Mammary epithelial cell (primary cell): ENCODE measurements at regions of chr3 and their contacts with region 1.

Region 1: DNA sequence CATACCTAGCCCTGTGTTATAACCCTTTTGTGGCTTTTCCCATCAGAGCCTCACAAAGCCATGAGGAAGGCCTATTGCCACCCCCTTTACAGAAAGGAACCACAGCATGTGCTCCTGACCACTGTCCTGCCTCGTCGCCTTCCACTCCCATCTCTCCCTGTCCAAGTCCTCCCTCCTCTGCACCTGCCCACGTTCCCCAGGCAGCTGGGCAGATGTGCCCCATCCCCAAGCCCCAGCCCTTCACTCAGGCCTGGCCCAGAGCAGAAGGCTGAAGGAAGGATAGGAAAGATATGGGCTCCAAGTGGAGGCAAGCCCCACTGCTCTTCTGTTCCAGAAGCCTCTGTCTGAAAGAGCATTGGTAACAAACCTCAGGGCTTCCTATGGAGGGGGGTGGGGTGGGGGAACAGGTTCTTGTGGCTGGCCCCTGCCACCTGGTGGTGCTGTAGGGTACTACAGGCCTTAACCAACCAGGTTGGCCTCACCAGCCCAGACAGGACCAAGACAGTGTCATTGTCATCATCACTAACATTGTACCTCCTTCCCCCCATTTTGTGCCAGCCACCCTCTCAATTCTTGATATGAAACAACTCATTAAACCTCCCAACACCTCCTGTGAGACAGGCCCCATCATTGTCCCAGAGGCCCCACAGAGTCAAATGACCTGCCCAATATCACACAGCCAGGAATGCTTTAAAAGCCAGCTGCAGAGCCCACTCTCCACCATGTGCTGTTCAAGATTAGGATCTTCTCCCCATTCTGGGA is 10.0 kb downstream of the POC1A start:
- DNase-seq: peak; percentile 53
- H3K4me3 ChIP-seq: no peak overlapping the region
- H3K27ac ChIP-seq: no peak overlapping the region
- H3K4me1 ChIP-seq: peaks cover 9% of the 10 kb centered on the region
- H3K27me3 ChIP-seq: no peaks in the 10 kb centered on the region
- CTCF ChIP-seq: peak; percentile 82 to 94

Region 2: GRCh38 chr3:51879937-51880336 is 264.3 kb before region 1 on chr3:
- CTCF ChIA-PET with region 1: no interaction called
- dilution Hi-C with region 1: loop called (anchors 10 kb)
- in situ Hi-C with region 1: no loop called
- intact Hi-C with region 1: no loop called
- DNase-seq: no peak
- H3K4me3 ChIP-seq: no peak overlapping the region
- H3K27ac ChIP-seq: no peak overlapping the region
- H3K4me1 ChIP-seq: no peaks in the 10 kb centered on the region
- H3K27me3 ChIP-seq: no peaks in the 10 kb centered on the region
- CTCF ChIP-seq: no peak

Region 3: GRCh38 chr3:51955893-51956770 is 188.1 kb before region 1 on chr3:
- CTCF ChIA-PET with region 1: no interaction called
- dilution Hi-C with region 1: loop called (anchors 10 kb)
- in situ Hi-C with region 1: no loop called
- intact Hi-C with region 1: loop called (anchors 5 kb)
- DNase-seq: peak; percentile 64
- H3K4me3 ChIP-seq: peak overlapping the region in 1 of 3 experiments; percentile 19
- H3K27ac ChIP-seq: no peak overlapping the region
- H3K4me1 ChIP-seq: peaks cover 15% of the 10 kb centered on the region
- H3K27me3 ChIP-seq: no peaks in the 10 kb centered on the region
- CTCF ChIP-seq: peak; percentile 46 to 72

Region 4: DNA sequence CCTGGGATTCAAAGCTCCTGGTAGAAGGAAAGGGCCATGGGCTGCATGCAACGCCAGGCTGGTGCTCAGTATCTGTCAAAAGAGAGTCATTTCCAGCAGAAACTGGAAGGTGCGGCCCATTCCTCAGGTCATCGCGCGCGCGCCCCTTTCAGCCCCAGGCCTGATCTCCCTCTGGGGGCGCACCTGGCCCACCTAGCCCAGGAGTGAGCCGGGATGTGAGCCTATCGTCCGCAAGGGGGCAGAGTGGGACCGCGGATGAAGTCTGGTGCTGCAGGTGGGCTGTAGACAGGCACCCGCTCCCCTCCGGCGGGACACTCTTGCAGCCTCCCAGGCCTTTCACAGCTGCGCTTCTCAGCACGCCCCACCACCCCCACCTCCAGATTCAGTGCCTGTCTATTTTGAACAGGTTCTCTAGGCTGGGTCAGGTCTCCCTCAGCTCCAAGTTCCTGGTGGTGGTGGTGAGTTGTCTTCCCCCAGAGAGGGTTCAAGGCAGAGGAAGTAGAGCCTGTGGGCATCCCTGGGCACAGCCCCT is 142.7 kb before region 1 on chr3:
- CTCF ChIA-PET with region 1: no interaction called
- dilution Hi-C with region 1: no loop called
- in situ Hi-C with region 1: loop called in 1 of 2 experiments (anchors 5 kb)
- intact Hi-C with region 1: loop called (anchors 1 kb)
- DNase-seq: peak; percentile 49
- H3K4me3 ChIP-seq: no peak overlapping the region
- H3K27ac ChIP-seq: no peak overlapping the region
- H3K4me1 ChIP-seq: peaks cover 35% of the 10 kb centered on the region
- H3K27me3 ChIP-seq: no peaks in the 10 kb centered on the region
- CTCF ChIP-seq: peak; percentile 75 to 90

Region 5: GRCh38 chr3:52181543-52181942 is 37.3 kb after region 1 on chr3:
- CTCF ChIA-PET with region 1: no interaction called
- dilution Hi-C with region 1: loop called (anchors 5 kb)
- in situ Hi-C with region 1: no loop called
- intact Hi-C with region 1: no loop called
- DNase-seq: peak; percentile 57
- H3K4me3 ChIP-seq: no peak overlapping the region
- H3K27ac ChIP-seq: no peak overlapping the region
- H3K4me1 ChIP-seq: peaks cover 7% of the 10 kb centered on the region
- H3K27me3 ChIP-seq: no peaks in the 10 kb centered on the region
- CTCF ChIP-seq: no peak

Region 6: DNA sequence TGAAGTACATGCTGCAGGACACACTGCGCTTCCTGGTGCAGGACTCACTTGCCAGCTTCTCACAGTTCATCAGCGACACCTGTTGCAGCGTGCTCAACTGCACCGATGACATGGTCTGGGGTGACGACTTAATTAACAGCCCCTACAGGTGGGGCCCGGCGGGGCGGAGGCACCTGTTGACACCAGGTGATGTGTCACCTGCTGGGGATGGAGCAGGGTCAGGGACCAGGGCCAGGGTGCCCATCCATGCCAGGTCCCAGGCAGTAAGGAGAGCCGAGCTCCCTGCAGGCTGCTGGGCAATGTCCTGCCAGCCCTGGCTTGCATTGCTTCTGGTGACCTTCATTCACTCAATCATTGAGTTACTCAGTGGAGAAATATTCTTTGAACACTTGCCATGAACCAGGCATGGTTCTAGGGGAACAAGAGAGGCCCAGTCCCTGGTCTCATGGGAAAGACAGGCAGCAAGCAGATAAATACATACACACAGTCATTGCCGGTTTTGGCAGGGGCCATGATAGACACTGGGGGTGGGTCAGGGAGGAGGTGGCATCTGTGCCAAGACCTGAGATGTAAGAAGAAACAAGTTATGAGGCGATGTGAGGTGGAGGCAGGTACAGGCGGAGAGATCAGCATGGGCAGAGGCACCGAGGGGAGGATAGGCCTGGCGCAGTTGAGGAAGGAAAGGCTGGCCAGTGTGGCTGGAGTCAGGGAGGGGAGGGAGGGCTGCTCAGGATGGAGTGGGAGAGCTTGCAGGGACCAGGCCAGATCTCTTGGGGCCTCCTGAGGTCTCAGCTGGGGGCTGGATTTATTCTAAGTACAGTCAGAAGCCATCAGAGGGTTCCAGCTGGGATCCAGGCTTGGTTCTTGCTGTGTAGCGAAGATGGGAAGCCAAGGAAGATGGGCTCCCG is 202.7 kb after region 1 on chr3:
- CTCF ChIA-PET with region 1: no interaction called
- dilution Hi-C with region 1: no loop called
- in situ Hi-C with region 1: no loop called
- intact Hi-C with region 1: no loop called
- DNase-seq: peak; percentile 6
- H3K4me3 ChIP-seq: no peak overlapping the region
- H3K27ac ChIP-seq: no peak overlapping the region
- H3K4me1 ChIP-seq: peaks cover 5% of the 10 kb centered on the region
- H3K27me3 ChIP-seq: no peaks in the 10 kb centered on the region
- CTCF ChIP-seq: no peak